Activated CD8-positive, alpha-beta T cell treated with anti-CD3 and anti-CD28 coated beads for 36 hours (primary cell): ENCODE measurements at regions of chr4 and their contacts with region 1.

Region 1: GRCh38 chr4:102610007-102610406 is 108.8 kb downstream of the NFKB1 start:
- DNase-seq: no peak
- ATAC-seq: no peak
- H3K4me3 Mint-ChIP-seq: no peak overlapping the region
- H3K27ac Mint-ChIP-seq: peak overlapping the region; percentile 63
- H3K4me1 Mint-ChIP-seq: peaks cover 80% of the 10 kb centered on the region
- H3K27me3 Mint-ChIP-seq: no peaks in the 10 kb centered on the region
- CTCF ChIP-seq: no peak

Region 2: DNA sequence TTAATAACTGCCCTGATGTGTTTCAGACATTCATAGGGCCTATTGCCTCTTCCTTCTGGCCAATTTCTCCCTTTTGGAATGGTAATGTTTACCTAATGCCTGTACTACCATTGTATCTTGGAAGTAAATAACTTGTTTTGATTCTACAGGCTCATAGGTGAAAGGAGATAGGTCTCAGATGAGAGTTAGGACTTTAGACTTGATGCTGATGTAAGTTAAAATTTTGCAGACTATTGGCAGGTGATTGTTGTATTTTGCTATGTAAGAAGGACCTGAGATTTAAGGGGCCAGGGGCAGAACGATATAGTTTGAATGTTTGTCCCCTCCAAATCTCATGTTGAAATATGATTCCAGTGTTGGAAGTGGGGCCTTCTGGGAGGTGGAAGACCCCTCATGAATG is 480.2 kb before region 1 on chr4:
- CTCF ChIA-PET with region 1: no interaction called
- POLR2A ChIA-PET with region 1: no interaction called
- intact Hi-C with region 1: no loop called
- DNase-seq: no peak
- ATAC-seq: no peak
- H3K4me3 Mint-ChIP-seq: no peak overlapping the region
- H3K27ac Mint-ChIP-seq: no peak overlapping the region
- H3K4me1 Mint-ChIP-seq: no peaks in the 10 kb centered on the region
- H3K27me3 Mint-ChIP-seq: no peaks in the 10 kb centered on the region
- CTCF ChIP-seq: no peak

Region 3: GRCh38 chr4:102272318-102272717 is 337.7 kb before region 1 on chr4:
- CTCF ChIA-PET with region 1: no interaction called
- POLR2A ChIA-PET with region 1: no interaction called
- intact Hi-C with region 1: no loop called
- DNase-seq: no peak
- ATAC-seq: no peak
- H3K4me3 Mint-ChIP-seq: no peak overlapping the region
- H3K27ac Mint-ChIP-seq: no peak overlapping the region
- H3K4me1 Mint-ChIP-seq: no peaks in the 10 kb centered on the region
- H3K27me3 Mint-ChIP-seq: no peaks in the 10 kb centered on the region
- CTCF ChIP-seq: no peak

Region 4: DNA sequence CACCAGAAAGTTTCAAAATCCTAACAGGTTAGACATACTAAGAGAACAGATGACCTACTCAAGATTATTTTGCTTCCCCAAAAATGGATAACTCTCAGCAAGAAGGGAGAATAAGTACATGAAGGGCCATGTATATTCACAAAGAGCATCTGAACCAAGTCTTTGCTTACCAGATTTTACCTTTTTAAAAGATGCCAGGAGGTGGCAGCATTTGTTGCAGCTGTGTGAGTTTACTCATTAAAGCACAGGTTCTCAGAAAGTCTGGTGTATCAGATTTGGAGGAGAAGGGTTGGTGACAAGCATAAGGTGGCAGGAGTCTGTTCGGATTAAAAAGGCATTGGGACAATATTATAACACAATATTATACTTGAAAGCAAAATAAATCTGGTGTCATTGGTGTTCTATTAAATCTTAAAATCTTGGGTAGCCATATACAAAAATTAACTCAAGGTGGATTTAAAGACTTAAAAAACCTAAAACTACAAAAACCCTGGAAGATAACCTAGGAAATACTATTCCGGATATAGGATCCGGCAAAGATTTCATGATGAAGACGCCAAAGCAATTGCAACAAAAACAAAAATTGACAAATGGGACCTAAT is 160.2 kb before region 1 on chr4:
- CTCF ChIA-PET with region 1: interaction called, 11 read pairs
- POLR2A ChIA-PET with region 1: interaction called, 3 read pairs
- intact Hi-C with region 1: no loop called
- DNase-seq: peak; percentile 73
- ATAC-seq: peak; percentile 77
- H3K4me3 Mint-ChIP-seq: no peak overlapping the region
- H3K27ac Mint-ChIP-seq: no peak overlapping the region
- H3K4me1 Mint-ChIP-seq: peaks cover 48% of the 10 kb centered on the region
- H3K27me3 Mint-ChIP-seq: no peaks in the 10 kb centered on the region
- CTCF ChIP-seq: peak; percentile 88

Region 5: DNA sequence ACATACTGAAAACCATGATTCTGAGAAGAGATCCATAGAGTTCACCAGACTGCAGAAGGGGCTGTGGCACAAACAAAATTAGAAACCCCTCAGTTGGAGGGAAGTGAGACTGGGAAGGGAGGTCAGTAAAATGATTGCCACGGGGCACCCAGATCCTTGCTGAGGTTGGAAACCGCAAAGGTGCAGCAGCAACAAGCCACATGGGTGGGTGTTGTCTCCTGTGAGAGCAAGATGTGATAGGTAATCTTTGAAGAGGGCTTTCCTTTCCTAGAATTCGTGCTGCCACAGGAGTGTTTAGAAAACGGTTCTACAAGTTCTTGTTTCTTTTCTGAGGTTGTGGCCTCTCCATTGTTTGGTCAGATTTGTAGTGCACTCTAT is 23.4 kb before region 1 on chr4:
- CTCF ChIA-PET with region 1: interaction called, 5 read pairs
- POLR2A ChIA-PET with region 1: interaction called, 15 read pairs
- intact Hi-C with region 1: no loop called
- DNase-seq: peak; percentile 83
- ATAC-seq: peak; percentile 62
- H3K4me3 Mint-ChIP-seq: no peak overlapping the region
- H3K27ac Mint-ChIP-seq: peak overlapping the region; percentile 95
- H3K4me1 Mint-ChIP-seq: peaks cover 87% of the 10 kb centered on the region
- H3K27me3 Mint-ChIP-seq: no peaks in the 10 kb centered on the region
- CTCF ChIP-seq: no peak

Region 6: DNA sequence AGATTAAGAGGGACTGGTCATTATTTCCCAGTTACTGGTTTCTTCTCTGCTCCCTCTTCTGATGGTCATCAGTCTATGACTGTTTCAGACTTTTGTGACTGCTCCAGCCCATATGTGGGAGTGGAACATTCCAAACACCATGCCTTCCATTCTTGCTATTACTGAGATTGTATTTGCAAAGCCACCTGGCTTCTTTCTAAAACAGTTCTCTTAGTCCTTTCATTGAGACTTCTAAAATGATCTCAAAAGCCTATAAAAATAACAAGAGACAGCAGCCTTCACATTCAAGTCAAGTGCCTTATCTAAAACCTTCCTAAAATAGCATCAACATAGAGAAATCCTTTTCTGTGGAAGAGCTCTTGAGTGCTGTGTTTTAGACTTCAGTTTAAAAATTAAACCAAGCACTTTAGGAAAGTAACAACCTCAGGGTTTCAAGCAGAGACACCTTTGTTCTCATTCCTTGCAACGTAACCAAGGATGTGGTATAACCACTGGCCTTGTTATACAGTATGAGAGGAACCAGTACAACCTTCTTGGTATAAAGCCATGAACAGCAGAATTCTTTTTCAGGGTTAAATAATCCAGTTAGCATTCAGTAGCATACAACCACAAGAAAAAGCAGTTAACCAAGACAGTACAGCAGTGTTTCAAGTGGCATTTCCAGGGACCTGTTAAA is 11.8 kb before region 1 on chr4:
- CTCF ChIA-PET with region 1: interaction called, 4 read pairs
- POLR2A ChIA-PET with region 1: interaction called, 10 read pairs
- intact Hi-C with region 1: no loop called
- DNase-seq: peak; percentile 49
- ATAC-seq: peak; percentile 75
- H3K4me3 Mint-ChIP-seq: no peak overlapping the region
- H3K27ac Mint-ChIP-seq: peak overlapping the region; percentile 94
- H3K4me1 Mint-ChIP-seq: peaks cover 68% of the 10 kb centered on the region
- H3K27me3 Mint-ChIP-seq: no peaks in the 10 kb centered on the region
- CTCF ChIP-seq: no peak

Region 7: DNA sequence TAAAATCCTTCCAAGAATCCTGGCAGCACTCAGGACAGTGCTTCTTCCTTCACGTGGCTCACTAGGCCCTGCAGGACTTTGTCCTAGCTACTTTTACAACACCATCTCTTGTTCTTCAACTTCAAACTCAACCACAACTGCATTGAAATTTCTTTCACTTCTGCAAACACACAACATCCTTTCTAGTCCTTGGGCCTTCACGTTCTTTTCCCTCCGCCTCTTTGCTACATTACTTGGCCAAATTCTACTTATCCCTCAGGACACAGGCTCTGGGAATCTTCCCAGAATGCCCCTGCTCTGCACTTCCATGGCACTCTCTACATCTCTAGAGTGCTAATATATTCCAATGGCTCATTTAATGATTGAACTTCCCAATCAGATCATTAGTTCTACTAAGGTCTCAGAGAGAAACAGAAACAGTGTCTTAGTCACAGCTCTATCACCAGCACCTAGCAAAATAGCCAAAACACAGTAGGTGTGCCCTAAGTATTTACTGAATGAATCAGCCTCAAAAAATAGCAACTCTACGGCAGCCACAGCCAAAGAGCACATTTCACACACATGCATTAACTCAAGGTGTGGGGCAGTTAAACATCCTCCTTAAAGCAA is 77.5 kb after region 1 on chr4:
- CTCF ChIA-PET with region 1: no interaction called
- POLR2A ChIA-PET with region 1: no interaction called
- intact Hi-C with region 1: no loop called
- DNase-seq: no peak
- ATAC-seq: peak; percentile 42
- H3K4me3 Mint-ChIP-seq: no peak overlapping the region
- H3K27ac Mint-ChIP-seq: no peak overlapping the region
- H3K4me1 Mint-ChIP-seq: no peaks in the 10 kb centered on the region
- H3K27me3 Mint-ChIP-seq: no peaks in the 10 kb centered on the region
- CTCF ChIP-seq: no peak

Region 8: GRCh38 chr4:103118166-103118565 is 508.2 kb after region 1 on chr4:
- CTCF ChIA-PET with region 1: no interaction called
- POLR2A ChIA-PET with region 1: no interaction called
- intact Hi-C with region 1: no loop called
- DNase-seq: no peak
- ATAC-seq: no peak
- H3K4me3 Mint-ChIP-seq: no peak overlapping the region
- H3K27ac Mint-ChIP-seq: no peak overlapping the region
- H3K4me1 Mint-ChIP-seq: no peaks in the 10 kb centered on the region
- H3K27me3 Mint-ChIP-seq: no peaks in the 10 kb centered on the region
- CTCF ChIP-seq: no peak